Heart left ventricle (tissue), 16 donors: ENCODE measurements at regions of chr3 and their contacts with region 1.

Region 1: DNA sequence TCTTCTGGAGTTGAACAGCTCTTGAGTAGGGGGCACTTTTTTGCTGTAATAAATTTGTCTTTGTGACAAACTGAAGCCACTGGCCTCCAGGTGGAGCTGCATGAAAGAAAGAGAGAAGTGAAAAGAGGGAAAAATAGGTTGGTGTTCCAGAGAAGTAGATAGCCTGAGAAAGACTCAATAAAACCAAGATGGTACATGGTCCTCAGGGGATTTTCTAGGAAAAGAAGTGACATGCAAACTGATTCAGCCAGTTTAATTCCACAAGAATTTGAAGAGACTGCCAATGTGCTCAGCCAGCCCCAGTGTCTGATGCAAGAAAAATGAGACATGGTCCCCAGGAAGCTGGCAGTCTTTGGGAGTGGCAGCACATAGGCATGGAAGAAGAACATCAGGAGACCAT is 152.7 kb downstream of the CD47 start:
- DNase-seq: peak in 1 of 5 donors; percentile 26
- ATAC-seq: peak in 2 of 4 donors; percentile 36
- H3K4me3 ChIP-seq: no peak overlapping the region
- H3K27ac ChIP-seq: no peak overlapping the region
- H3K4me1 ChIP-seq: peaks cover 0 to 4% (median 0%) of the 10 kb centered on the region in 12 donors
- H3K27me3 ChIP-seq: no peaks in the 10 kb centered on the region
- CTCF ChIP-seq: peak; percentile 15 to 59 (median 47)
- POLR2A ChIP-seq: no peak

Region 2: GRCh38 chr3:107690522-107691138 is 247.5 kb before region 1 on chr3:
- intact Hi-C with region 1: no loop called
- DNase-seq: no peak
- ATAC-seq: peak in 2 of 4 donors; percentile 55 to 61
- H3K4me3 ChIP-seq: no peak overlapping the region
- H3K27ac ChIP-seq: no peak overlapping the region
- H3K4me1 ChIP-seq: peaks cover 0 to 8% (median 0%) of the 10 kb centered on the region in 12 donors
- H3K27me3 ChIP-seq: no peaks in the 10 kb centered on the region
- CTCF ChIP-seq: peak; percentile 31 to 66 (median 52)
- POLR2A ChIP-seq: no peak

Region 3: DNA sequence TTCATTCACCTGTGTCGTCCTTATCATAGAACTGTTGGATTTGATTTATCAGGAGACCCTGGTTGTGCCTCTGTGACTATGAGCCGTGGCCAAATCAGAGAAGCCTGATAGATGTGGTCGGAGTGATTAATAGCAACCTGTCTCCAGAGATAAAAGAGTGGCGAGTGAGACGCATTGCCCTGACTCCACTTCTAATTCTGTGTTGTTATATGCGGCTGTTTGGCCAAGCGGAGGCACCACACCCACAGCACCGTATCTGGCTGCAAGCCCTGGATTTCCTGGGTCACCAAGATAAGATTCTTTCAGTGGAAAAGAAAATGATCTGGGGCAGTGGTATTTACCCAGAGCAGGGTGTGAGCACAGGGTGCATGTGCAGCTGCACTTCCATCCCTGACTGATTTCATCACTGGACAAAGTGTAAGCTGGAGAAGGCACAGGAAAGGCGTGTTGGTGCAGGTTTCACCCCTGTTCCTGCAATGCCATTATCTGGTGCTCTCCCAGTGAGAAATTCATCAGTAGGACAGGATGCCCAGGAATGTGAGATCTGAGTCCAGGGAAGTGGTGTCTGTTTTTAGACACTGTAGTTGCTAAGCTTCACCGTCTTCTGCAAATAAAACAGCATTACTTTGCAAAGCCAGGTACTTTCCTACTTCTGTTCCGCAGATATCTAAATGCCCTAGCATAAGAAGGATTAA is 68.1 kb after region 1 on chr3:
- intact Hi-C with region 1: loop called in 1 of 10 experiments (anchors 10 kb)
- DNase-seq: peak in 3 of 5 donors; percentile 42 to 47 (median 44)
- ATAC-seq: peak; percentile 83 to 89 (median 86)
- H3K4me3 ChIP-seq: peak overlapping the region in 1 of 12 donors; percentile 13
- H3K27ac ChIP-seq: peak overlapping the region in 11 of 12 donors; percentile 2 to 77 (median 40)
- H3K4me1 ChIP-seq: peaks cover 0 to 40% (median 13%) of the 10 kb centered on the region in 12 donors
- H3K27me3 ChIP-seq: no peaks in the 10 kb centered on the region
- CTCF ChIP-seq: no peak
- POLR2A ChIP-seq: no peak

Region 4: GRCh38 chr3:108221911-108222852 is 284.0 kb after region 1 on chr3 and contains the start of gene IFT57:
- intact Hi-C with region 1: loop called in 3 of 10 experiments (anchors 10 kb)
- DNase-seq: peak; percentile 96 to 98 (median 98)
- ATAC-seq: peak; percentile 100
- H3K4me3 ChIP-seq: peak within 1 kb of the TSS; percentile 66 to 91 (median 81)
- H3K27ac ChIP-seq: peak within 1 kb of the TSS in 11 of 12 donors; percentile 6 to 88 (median 73)
- H3K4me1 ChIP-seq: peaks cover 0 to 49% (median 13%) of the 10 kb centered on the region in 12 donors
- H3K27me3 ChIP-seq: no peaks in the 10 kb centered on the region
- CTCF ChIP-seq: no peak
- POLR2A ChIP-seq: peak in 1 of 2 donors; percentile 45
- total RNA-seq, gene IFT57: 11.8 to 36.4 (median 22.9) TPM

Region 5: DNA sequence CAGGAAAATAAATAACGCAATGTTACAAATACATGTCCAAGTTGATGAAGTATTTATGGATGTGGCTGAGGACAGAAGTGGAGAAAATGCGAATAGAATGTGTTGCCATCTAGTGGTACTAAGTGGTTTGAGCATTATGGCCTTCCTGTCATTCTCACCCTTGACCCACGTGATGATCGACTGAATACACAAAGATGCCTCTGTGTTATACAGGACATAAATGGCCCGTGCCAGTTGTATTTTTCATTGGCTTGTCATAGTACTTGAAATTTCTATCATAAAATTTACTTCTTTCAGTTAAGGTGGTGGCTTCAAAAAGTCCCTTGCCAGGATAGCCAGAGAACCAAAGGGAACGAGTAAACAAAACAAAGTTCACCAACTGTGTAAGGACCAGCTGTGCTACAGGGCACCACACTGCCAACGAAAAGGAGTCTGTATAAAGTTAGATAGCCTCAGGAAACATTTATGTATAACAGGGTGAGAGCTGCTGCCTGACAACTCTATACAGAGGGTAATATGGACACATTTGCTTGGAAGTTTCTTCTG is 468.6 kb after region 1 on chr3:
- intact Hi-C with region 1: loop called in 7 of 10 experiments (anchors 1 to 10 kb)
- DNase-seq: no peak
- ATAC-seq: peak; percentile 69 to 89 (median 74)
- H3K4me3 ChIP-seq: no peak overlapping the region
- H3K27ac ChIP-seq: no peak overlapping the region
- H3K4me1 ChIP-seq: peaks cover 0 to 8% (median 0%) of the 10 kb centered on the region in 12 donors
- H3K27me3 ChIP-seq: no peaks in the 10 kb centered on the region
- CTCF ChIP-seq: peak; percentile 27 to 67 (median 53)
- POLR2A ChIP-seq: no peak

Region 6: DNA sequence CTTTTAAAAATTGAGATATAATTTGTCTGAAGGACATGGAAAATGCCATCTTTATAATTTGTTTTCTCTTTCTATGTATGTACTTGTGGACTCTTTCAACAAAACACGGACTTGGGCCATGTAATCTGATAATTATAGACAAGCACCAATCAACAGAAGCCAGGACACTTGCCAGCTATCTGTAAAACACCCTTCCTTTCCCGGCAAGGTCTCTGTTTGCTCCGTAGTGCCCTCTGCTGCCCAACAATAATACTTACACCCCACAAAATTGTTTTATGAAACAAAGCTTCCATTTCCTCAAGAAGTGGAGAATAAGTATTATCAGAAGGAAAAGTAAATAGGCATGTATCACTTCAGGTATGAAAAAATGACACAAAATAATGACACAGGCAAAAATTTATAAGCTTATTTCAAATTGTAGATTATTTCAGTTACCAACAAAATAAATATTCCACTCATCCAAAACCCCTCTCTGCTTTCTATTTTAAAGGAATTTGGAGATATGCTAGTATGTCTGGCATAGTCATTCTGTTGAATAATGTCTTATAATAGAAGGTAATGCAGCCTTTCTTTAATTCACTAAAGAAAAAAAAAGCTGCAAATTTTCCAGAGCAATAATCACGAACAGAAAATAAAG is 539.5 kb after region 1 on chr3:
- intact Hi-C with region 1: loop called in 9 of 10 experiments (anchors 2 to 10 kb)
- DNase-seq: peak; percentile 20 to 51 (median 38)
- ATAC-seq: peak in 2 of 4 donors; percentile 50 to 56
- H3K4me3 ChIP-seq: no peak overlapping the region
- H3K27ac ChIP-seq: no peak overlapping the region
- H3K4me1 ChIP-seq: peaks cover 0 to 7% (median 0%) of the 10 kb centered on the region in 12 donors
- H3K27me3 ChIP-seq: no peaks in the 10 kb centered on the region
- CTCF ChIP-seq: peak; percentile 60 to 83 (median 68)
- POLR2A ChIP-seq: no peak

Region 7: GRCh38 chr3:108546247-108546646 is 608.1 kb after region 1 on chr3:
- intact Hi-C with region 1: loop called in 1 of 10 experiments (anchors 10 kb)
- DNase-seq: no peak
- ATAC-seq: no peak
- H3K4me3 ChIP-seq: peak overlapping the region in 9 of 12 donors; percentile 17 to 45 (median 28)
- H3K27ac ChIP-seq: peak overlapping the region in 3 of 12 donors; percentile 9 to 52 (median 47)
- H3K4me1 ChIP-seq: peaks cover 0 to 15% (median 0%) of the 10 kb centered on the region in 12 donors
- H3K27me3 ChIP-seq: no peaks in the 10 kb centered on the region
- CTCF ChIP-seq: no peak
- POLR2A ChIP-seq: no peak